Prostate gland (tissue), 2 donors: ENCODE measurements at regions of chr16 and their contacts with region 1.

Region 1: DNA sequence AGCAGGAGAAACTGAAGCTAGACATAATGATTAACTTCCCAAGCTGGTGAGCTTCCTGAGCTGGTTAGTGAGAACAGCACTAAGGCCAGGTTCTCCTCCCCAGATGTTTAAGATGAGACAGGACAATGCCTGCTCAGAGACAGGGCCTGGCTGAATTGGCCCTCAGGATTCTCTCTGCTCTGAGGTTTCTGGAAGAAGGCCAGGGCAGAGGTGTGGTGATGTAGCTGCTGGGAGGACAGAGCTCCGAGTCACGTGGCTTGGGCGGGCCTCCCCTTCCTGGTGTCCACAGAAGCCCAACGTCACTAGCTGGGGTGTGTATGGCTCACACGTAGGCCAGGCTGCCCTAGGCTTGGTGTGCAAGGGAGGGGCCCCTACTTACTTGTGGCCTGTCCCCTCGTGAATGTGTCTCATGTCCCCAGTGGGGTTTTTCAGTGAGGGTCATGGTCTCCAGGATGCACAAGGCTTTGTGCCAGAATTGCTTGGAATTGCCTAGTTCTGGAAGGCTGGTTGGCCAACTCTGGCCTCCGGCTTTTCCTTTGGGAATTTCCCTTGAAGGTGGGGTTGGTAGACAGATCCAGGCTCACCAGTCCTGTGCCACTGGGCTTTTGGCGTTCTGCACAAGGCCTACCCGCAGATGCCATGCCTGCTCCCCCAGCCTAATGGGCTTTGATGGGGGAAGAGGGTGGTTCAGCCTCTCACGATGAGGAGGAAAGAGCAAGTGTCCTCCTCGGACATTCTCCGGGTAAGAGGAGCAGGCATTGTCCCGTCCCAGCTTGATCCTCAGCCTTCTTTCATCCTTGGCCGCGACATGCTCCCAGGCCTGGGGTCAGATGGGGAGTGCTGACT is 3.4 kb downstream of the NOD2 start:
- DNase-seq: peak; percentile 46
- H3K4me3 ChIP-seq: no peak overlapping the region
- H3K27ac ChIP-seq: peak overlapping the region; percentile 33 to 49
- H3K4me1 ChIP-seq: no peaks in the 10 kb centered on the region
- H3K27me3 ChIP-seq: no peaks in the 10 kb centered on the region
- CTCF ChIP-seq: no peak
- POLR2A ChIP-seq: no peak

Region 2: DNA sequence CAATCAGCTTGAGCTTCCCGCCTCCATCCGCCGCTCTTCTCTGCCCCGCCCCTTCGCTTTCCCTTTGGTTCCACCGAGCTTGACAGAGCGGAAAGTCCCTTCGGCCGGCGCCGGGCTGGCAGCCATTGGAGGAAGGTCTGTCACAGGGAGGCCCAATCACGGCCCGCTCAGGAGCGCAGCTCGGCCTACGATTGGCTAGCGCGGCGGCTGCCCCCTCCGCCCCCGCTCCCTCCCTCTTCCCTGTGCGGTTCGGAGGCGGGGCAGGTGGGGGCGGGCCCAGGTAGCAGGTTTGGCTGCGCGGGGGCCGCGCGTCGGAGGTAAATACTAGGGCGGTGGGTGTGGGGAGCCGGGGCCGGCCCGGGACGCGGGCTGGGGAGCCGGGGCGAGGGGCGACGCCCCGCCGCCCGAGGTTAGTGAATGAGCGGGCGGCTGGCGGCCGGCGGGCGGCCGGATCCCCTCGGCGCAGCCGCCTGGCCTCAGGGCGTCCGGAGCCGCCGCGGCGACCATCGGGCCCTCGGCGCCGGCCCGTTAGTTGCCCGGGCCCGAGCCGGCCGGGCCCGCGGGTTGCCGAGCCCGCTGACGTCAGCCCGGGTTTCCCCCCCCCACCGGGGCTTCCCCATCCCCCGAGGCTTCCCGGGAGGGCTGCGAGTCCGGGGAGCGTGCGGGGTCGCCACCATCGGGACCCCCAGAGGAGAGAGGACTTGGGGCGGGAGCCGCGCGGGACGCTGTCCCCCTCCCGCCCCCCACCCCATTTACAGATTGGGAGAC is 45.2 kb after region 1 on chr16 and contains the start of gene CYLD:
- intact Hi-C with region 1: loop called (anchors 5 kb)
- DNase-seq: peak; percentile 100
- H3K4me3 ChIP-seq: peak within 1 kb of the TSS; percentile 86 to 96
- H3K27ac ChIP-seq: peak within 1 kb of the TSS; percentile 86 to 88
- H3K4me1 ChIP-seq: no peaks in the 10 kb centered on the region
- H3K27me3 ChIP-seq: no peaks in the 10 kb centered on the region
- CTCF ChIP-seq: no peak
- POLR2A ChIP-seq: peak; percentile 78
- total RNA-seq, gene CYLD: 28.1 to 30.2 TPM